Vagina (tissue), 2 donors: ENCODE measurements at regions of chr14 and their contacts with region 1.

Region 1: DNA sequence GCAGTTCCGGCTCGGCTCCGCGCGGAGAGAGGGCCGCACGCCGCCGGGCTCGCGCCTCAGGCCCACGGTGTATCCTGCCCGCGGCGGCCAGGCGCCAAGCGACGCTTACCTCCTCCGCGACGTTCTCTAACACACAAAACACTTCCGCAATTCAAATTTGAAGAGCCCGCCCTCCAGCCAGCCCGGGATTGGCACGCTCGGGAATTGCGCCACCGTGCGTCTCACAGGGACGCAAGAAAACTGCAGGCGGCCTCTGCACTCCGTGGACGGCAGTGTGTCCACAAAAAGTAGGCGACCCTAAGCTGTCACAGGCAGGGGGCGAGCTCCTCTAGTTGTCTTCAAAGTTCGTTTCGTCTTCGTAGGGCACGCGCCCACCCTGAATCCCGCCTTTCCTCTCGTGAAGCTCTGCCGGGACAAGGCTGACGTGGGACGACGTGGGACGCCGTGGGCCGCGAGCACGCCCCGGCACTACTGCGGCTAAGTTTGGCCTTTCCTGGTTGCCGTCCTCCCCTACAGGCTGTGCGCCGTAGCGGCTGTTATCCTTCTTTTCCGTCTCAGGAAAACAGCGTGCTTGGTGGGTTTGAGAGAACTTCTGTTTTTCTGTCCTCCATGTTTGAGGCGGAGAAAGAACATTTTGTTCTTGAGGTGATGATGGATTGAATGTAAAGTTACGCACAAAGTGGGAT is at the start of gene MIS18BP1:
- DNase-seq: peak; percentile 96 to 97
- H3K4me3 ChIP-seq: peak within 1 kb of the TSS; percentile 44 to 67
- H3K27ac ChIP-seq: peak within 1 kb of the TSS; percentile 92
- H3K4me1 ChIP-seq: peaks cover 41% of the 10 kb centered on the region
- H3K27me3 ChIP-seq: no peaks in the 10 kb centered on the region
- CTCF ChIP-seq: peak; percentile 1 to 70 (median 69)
- POLR2A ChIP-seq: peak in 1 of 2 donors; percentile 39
- total RNA-seq, gene MIS18BP1: 18.7 TPM

Region 2: GRCh38 chr14:44912041-44912869 is 341.0 kb before region 1 on chr14:
- intact Hi-C with region 1: loop called (anchors 10 kb)
- DNase-seq: no peak
- H3K4me3 ChIP-seq: peak overlapping the region; percentile 49 to 66
- H3K27ac ChIP-seq: no peak overlapping the region
- H3K4me1 ChIP-seq: peaks cover 10% of the 10 kb centered on the region
- H3K27me3 ChIP-seq: no peaks in the 10 kb centered on the region
- CTCF ChIP-seq: no peak
- POLR2A ChIP-seq: no peak

Region 3: GRCh38 chr14:45134051-45134958 is 118.9 kb before region 1 on chr14 and contains the start of gene FKBP3:
- intact Hi-C with region 1: loop called (anchors 10 kb)
- DNase-seq: peak; percentile 97 to 98
- H3K4me3 ChIP-seq: peak within 1 kb of the TSS; percentile 54 to 57
- H3K27ac ChIP-seq: peak within 1 kb of the TSS; percentile 77
- H3K4me1 ChIP-seq: peaks cover 46% of the 10 kb centered on the region
- H3K27me3 ChIP-seq: no peaks in the 10 kb centered on the region
- CTCF ChIP-seq: no peak
- POLR2A ChIP-seq: peak in 1 of 2 donors; percentile 64
- total RNA-seq, gene FKBP3: 37.1 TPM

Region 4: GRCh38 chr14:45270031-45270430 is 16.8 kb after region 1 on chr14:
- intact Hi-C with region 1: no loop called
- DNase-seq: no peak
- H3K4me3 ChIP-seq: no peak overlapping the region
- H3K27ac ChIP-seq: no peak overlapping the region
- H3K4me1 ChIP-seq: no peaks in the 10 kb centered on the region
- H3K27me3 ChIP-seq: no peaks in the 10 kb centered on the region
- CTCF ChIP-seq: no peak
- POLR2A ChIP-seq: no peak